Activated CD4-positive, alpha-beta T cell treated with anti-CD3 and anti-CD28 coated beads, Interleukin-2, amount 10 ng/mL, durations not matched to agents 24 days and 14 days (primary cell): ENCODE measurements at regions of chr1 and their contacts with region 1.

Region 1: GRCh38 chr1:59699227-59699847 is 115.4 kb upstream of the HOOK1 start:
- DNase-seq: peak; percentile 80
- H3K4me3 Mint-ChIP-seq: no peak overlapping the region
- H3K27ac Mint-ChIP-seq: no peak overlapping the region
- H3K4me1 Mint-ChIP-seq: peaks cover 26% of the 10 kb centered on the region
- H3K27me3 Mint-ChIP-seq: peaks cover 2% of the 10 kb centered on the region

Region 2: GRCh38 chr1:58739856-58740466 is 959.4 kb before region 1 on chr1:
- intact Hi-C with region 1: loop called (anchors 1 kb)
- DNase-seq: peak; percentile 82
- H3K4me3 Mint-ChIP-seq: no peak overlapping the region
- H3K27ac Mint-ChIP-seq: no peak overlapping the region
- H3K4me1 Mint-ChIP-seq: peaks cover 6% of the 10 kb centered on the region
- H3K27me3 Mint-ChIP-seq: peaks cover 7% of the 10 kb centered on the region

Region 3: GRCh38 chr1:59150577-59151391 is 548.6 kb before region 1 on chr1:
- intact Hi-C with region 1: loop called (anchors 5 kb)
- DNase-seq: peak; percentile 81
- H3K4me3 Mint-ChIP-seq: peak overlapping the region; percentile 35
- H3K27ac Mint-ChIP-seq: peak overlapping the region; percentile 51
- H3K4me1 Mint-ChIP-seq: peaks cover 33% of the 10 kb centered on the region
- H3K27me3 Mint-ChIP-seq: no peaks in the 10 kb centered on the region

Region 4: DNA sequence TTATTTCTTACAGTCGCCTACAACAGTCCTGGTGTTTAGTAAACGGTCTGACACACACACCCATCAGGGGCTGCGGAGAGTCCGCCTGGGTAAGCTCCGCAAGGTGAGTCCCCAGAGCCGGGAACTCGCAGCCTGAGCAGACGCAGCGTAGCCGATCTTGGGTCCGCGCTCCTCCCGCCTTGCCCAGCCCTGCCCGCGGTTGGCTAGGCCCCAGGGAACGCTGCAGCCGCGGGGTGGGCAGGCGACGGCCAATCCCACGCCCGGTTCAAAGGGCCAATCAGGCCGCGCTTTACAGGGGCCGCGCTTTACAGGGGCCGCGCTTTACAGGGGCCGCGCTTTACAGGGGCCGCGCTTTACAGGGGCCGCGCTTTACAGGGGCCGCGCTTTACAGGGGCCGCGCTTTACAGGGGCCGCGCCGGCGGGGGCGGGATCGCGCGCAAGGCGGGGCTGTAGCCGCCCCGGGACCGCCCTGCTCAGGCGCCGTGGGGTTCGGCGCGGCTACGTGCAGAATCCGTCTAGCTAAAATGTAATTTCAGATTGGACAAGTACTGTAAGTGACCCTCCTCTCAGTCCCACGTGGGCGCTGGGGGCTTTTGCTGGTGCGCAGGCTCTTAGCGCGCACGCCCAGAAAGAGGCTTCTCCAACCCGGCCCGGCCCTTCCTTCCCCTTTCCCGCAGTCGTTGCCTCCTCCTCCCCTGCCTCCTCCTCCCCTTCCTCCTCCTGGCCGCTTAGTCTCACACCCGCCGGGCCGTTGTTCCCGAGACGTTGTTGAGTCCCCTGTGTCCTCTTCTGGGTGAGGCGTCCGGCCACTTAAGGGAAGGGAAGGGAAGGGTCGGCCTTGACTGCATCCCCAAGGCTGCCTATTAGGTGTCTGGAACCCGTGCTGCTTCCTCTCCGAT is 402.7 kb before region 1 on chr1 and contains the start of gene FGGY:
- intact Hi-C with region 1: loop called (anchors 2 kb)
- DNase-seq: peak; percentile 96
- H3K4me3 Mint-ChIP-seq: peak within 1 kb of the TSS; percentile 85
- H3K27ac Mint-ChIP-seq: peak within 1 kb of the TSS; percentile 91
- H3K4me1 Mint-ChIP-seq: peaks cover 36% of the 10 kb centered on the region
- H3K27me3 Mint-ChIP-seq: no peaks in the 10 kb centered on the region
- total RNA-seq, gene FGGY: 6.2 and 8.1 TPM in 2 replicates

Region 5: DNA sequence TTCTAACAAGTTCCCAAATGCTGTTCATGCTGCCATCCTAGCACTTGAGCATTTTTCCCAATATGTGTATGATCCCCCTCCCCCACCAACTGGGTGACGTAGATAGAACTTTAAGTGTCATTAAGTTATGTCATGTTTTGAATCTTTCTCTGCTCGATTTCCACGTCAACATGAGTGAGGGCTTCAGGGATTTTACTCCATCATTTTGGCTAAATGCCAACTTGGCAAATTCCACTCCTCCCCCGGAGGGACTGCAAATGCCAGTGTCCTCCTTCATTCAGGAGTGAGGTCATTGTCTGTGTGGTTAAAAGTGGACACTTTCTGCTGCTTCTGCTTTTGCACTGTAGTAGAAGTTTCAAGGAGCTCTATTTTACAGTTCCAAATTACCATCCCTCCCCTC is 200.7 kb before region 1 on chr1:
- intact Hi-C with region 1: loop called (anchors 10 kb)
- DNase-seq: no peak
- H3K4me3 Mint-ChIP-seq: no peak overlapping the region
- H3K27ac Mint-ChIP-seq: no peak overlapping the region
- H3K4me1 Mint-ChIP-seq: peaks cover 6% of the 10 kb centered on the region
- H3K27me3 Mint-ChIP-seq: no peaks in the 10 kb centered on the region

Region 6: DNA sequence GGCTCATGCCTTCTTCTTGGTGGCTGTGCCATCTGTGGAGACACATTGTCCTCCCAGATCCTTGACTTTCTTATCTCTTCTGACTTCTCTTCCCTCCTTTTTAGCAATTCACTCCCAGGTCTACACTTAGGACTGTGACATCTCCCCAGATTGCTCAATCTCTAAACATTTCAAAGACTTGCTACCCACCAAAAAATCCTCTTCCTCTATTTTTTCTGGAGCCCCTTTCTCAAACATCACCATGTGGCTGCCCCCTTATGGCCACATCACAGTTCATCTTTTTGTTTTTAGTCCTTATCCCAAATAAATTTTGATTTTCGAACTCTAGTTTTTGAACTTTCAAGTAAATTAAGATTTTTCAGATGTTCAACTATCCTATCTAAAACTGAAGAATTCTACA is 33.2 kb before region 1 on chr1:
- intact Hi-C with region 1: no loop called
- DNase-seq: no peak
- H3K4me3 Mint-ChIP-seq: no peak overlapping the region
- H3K27ac Mint-ChIP-seq: no peak overlapping the region
- H3K4me1 Mint-ChIP-seq: no peaks in the 10 kb centered on the region
- H3K27me3 Mint-ChIP-seq: no peaks in the 10 kb centered on the region